ENCODE measurements at regions of chr2 and their contacts with region 1.

Region 1: GRCh38 chr2:152126664-152127063 is 27.8 kb upstream of the CACNB4 start:
- DNase-seq: no peak
- H3K4me3 ChIP-seq: no peak overlapping the region
- H3K27ac ChIP-seq: no peak overlapping the region
- H3K27me3 ChIP-seq: no peaks in the 10 kb centered on the region
- CTCF ChIP-seq: no peak

Region 2: GRCh38 chr2:152166633-152167032 is 40.0 kb after region 1 on chr2:
- intact Hi-C with region 1: loop called in 1 of 2 experiments (anchors 5 kb)
- DNase-seq: no peak
- H3K4me3 ChIP-seq: peak overlapping the region in 1 of 59 donors; percentile 8
- H3K27ac ChIP-seq: peak overlapping the region in 3 of 59 donors; percentile 7 to 25 (median 7)
- H3K27me3 ChIP-seq: no peaks in the 10 kb centered on the region
- CTCF ChIP-seq: no peak

Measured in dorsolateral prefrontal cortex (tissue), 120 donors.